A673 (cell line): ENCODE measurements at regions of chr4 and their contacts with region 1.

Region 1: GRCh38 chr4:73258686-73259570 is at the start of gene ANKRD17:
- DNase-seq: peak; percentile 88
- H3K4me3 ChIP-seq: peak within 1 kb of the TSS; percentile 83
- H3K27ac ChIP-seq: peak within 1 kb of the TSS; percentile 94
- H3K4me1 ChIP-seq: peaks cover 8% of the 10 kb centered on the region
- H3K27me3 ChIP-seq: no peaks in the 10 kb centered on the region
- CTCF ChIP-seq: no peak
- total RNA-seq, gene ANKRD17: 52.0 and 58.4 TPM in 2 replicates

Region 2: DNA sequence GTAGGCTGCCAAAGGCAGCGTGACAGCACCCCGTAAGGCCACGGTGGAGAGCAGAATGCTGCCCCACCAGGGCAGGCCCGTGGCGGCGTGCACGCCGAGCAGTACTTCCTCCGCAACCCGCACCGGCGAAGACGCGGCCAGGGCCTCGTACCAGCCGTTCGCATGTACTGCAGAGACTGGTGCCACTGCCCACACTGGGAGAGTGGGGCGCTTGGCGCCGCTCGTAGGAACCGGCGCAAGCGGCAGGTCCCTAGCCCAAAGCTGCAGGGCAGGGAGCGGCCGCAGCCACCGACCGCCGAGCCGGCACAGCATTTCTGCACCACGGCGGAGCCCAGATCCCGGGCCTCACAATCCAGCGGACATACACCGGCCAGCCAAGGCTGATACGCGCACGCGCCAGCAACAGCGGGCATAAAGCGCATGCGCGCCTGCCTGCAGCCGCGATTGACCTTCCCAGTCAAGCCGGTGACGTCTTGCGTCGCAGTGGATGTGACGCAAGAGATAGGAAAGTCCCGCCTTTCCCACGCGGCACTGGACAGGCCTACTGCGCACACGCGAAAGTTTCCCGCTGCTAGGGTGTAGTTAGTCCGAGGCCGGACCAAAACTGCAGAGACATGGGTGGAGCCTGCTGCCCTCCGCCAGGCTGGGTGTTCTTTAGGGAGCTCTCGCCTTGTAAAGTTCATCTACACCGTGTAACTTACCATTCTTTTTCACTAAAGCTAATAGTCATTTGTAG is 189.4 kb before region 1 on chr4 and contains the start of gene COX18:
- CTCF ChIA-PET with region 1: no interaction called
- POLR2A ChIA-PET with region 1: no interaction called
- intact Hi-C with region 1: loop called (anchors 5 kb)
- DNase-seq: peak; percentile 92
- H3K4me3 ChIP-seq: peak within 1 kb of the TSS; percentile 63
- H3K27ac ChIP-seq: peak within 1 kb of the TSS; percentile 88
- H3K4me1 ChIP-seq: no peaks in the 10 kb centered on the region
- H3K27me3 ChIP-seq: no peaks in the 10 kb centered on the region
- CTCF ChIP-seq: no peak
- total RNA-seq, gene COX18: 10.9 and 11.1 TPM in 2 replicates

Region 3: DNA sequence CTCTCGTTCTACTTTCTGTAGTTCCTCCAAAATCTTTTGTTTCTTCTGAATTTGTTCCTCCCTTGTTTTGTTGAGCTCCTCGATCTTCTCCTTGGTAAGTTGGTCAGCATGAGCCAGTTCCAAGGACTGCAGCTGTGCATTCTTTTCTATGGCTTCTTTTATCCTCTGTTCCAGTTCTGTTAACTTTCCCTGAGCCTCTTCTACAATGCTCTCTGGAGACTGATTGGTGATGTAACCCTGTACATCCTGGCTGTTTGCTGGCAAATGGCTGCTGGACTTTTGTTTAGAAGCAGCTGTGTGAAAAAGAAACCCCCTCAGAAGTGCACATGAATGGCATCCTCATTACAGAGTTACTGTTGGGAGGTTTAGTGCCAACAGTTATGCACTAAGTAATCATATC is 118.9 kb before region 1 on chr4:
- CTCF ChIA-PET with region 1: no interaction called
- POLR2A ChIA-PET with region 1: no interaction called
- intact Hi-C with region 1: loop called (anchors 10 kb)
- DNase-seq: no peak
- H3K4me3 ChIP-seq: no peak overlapping the region
- H3K27ac ChIP-seq: no peak overlapping the region
- H3K4me1 ChIP-seq: no peaks in the 10 kb centered on the region
- H3K27me3 ChIP-seq: no peaks in the 10 kb centered on the region
- CTCF ChIP-seq: no peak